AG04449 (cell line): ENCODE measurements at regions of chr9 and their contacts with region 1.

Region 1: DNA sequence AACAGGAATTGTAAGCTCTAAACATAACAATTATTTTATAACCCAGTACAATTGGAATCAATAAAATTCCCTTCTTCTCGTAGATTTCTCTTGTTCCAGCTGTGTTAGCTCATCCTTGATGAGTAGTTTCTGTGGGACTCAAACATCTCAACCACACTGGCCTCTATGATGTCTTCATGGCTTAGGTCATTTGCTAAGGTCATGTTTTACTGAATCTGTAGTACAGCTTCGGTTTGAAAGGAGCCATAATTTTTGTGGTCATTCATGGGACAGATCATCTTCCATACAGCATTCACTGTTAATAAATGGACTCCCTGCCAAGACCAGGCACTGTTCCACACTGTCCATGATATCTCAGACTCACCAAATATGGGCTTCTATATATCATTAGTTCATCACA is 369.0 kb upstream of the RFX3 start:
- DNase-seq: peak; percentile 70
- H3K4me3 ChIP-seq: no peak overlapping the region
- CTCF ChIP-seq: no peak

Region 2: GRCh38 chr9:3880851-3881250 is 13.9 kb before region 1 on chr9:
- CTCF ChIA-PET with region 1: interaction called, 10 read pairs
- POLR2A ChIA-PET with region 1: interaction called, 3 read pairs
- DNase-seq: peak; percentile 67
- H3K4me3 ChIP-seq: no peak overlapping the region
- CTCF ChIP-seq: no peak